GM10248 (cell line): ENCODE measurements at regions of chr19 and their contacts with region 1.

Region 1: DNA sequence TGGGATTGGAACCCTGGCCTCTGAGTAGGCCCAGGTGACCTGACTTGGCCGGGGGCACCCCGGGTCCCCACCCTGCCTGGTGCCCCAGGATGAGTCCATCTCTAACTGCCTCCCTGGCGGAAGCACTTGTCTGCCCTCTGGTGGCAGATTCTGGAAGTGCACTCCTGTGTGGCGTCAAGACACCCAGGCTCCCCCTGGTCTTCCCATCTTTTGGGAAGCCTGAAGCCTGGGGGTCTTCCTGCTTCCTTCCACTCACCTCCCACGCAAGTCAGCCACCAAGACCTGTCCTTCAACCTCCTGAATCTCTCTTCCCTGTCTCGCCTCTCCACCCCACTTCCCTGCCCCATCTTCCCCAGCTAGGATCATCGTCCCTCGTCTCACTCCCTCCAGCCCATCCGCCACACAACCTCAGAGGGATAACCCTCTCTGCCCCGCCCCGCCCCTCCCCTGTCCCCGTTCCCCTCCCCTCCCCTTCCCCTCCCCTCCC is 7.4 kb downstream of the RABAC1 start:
- DNase-seq: peak; percentile 85
- CTCF ChIP-seq: peak; percentile 99

Region 2: GRCh38 chr19:41866284-41866683 is 85.4 kb before region 1 on chr19:
- CTCF ChIA-PET with region 1: interaction called, 52 read pairs
- POLR2A ChIA-PET with region 1: interaction called, 13 read pairs
- DNase-seq: no peak
- CTCF ChIP-seq: no peak

Region 3: DNA sequence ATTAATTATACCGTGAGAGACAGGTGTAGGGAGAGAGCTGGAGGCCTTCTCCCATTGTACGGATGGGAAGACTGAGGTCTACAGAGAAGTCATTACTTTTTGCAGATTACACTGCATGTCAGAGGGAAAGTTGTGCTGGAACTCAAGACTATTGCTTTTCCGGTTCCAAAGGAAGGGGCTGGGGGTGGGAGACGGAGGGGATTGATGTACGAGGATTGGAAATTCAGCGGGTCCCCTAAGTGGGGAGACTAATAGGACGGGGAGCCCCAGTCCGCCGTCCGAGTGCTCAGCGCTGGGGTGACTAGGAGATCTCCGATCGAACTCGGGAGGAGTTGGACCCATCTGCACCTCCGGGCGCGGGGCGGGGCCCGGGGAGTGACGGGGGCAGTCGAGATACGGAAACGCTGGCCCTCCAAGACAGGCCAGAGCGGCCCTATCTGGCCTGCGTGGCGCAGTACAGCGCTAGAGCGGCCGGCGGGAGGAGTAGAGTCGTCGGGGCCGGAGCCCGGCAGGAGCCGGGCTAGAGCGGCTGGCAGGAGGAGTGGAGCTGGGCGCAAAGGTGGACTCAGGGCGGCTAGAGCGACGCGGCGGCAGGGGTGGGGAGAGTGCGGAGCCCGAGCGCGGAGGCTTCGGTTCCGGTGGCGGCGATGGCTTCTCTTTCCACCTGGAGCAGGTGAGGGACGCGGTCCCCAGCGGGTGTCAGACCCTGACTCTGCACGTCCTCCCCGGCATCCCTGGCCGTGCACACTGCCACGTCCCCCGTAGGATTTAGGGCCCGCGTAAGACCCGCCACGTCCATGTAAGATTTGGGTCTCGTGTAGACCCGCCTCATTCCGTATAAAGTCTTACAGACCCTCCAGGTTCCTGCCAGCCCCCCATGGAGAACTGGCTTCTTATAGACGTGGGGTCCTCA is 67.7 kb before region 1 on chr19:
- CTCF ChIA-PET with region 1: interaction called, 20 read pairs
- POLR2A ChIA-PET with region 1: no interaction called
- DNase-seq: peak; percentile 93
- CTCF ChIP-seq: peak; percentile 8